ENCODE measurements at regions of chr11 and their contacts with region 1.

Region 1: DNA sequence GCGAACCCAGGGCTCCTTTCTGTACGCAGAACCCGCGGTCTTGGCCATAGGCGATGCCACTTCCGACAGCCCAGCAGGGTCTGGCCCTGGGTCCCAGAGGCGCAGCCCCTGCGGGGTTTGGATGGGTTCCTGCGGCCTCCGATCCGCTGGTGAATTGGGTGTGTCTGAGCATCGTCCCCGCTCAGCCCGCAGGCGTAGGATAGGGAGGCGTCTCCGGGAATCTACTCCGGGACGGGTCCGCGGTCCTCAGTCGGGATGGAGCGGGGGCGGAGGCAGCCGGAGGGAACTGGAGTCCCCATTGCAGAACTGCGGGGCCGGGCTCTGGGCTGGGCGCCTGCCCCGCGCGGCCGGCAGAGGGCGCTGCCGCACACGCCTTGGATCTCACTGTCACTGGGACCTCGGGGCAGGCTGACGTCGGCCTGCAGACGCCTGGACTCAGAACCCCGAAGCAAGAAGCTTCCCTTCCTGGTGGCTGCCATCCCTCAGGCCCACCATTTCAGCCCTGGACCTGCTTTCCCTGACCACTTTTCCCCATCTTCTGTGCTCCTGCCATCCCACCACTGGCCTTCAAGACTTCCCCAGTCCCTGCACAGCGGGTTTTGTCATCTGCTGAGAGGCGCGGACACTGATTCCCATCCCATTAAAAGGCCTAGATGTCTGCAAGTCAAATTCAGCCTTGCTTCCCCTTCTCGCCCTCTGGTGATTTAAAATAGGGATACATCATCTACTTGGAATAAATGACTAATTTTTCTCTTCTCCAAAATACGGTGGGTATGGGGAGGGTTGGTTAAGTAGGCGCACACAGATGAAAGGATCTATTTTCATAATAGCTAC is 38.3 kb upstream of the CREB3L1 start:
- DNase-seq: no peak
- ATAC-seq: peak; percentile 93
- H3K4me3 ChIP-seq: peak overlapping the region; percentile 39; the same call in 1 of the 2 replicates
- H3K27ac ChIP-seq: no peak overlapping the region
- H3K4me1 ChIP-seq: peaks cover 12% of the 10 kb centered on the region
- H3K27me3 ChIP-seq: peaks cover 0 to 5% of the 10 kb centered on the region in 2 experiments; a peak in 1 of 4 replicates
- CTCF ChIP-seq: peak; percentile 95 to 96 (median 95)
- EP300 ChIP-seq: no peak
- POLR2A ChIP-seq: no peak
- RAD21 ChIP-seq: peak; percentile 86

Region 2: GRCh38 chr11:46265764-46266163 is 26.6 kb after region 1 on chr11:
- CTCF ChIA-PET with region 1: interaction called, 8 read pairs
- POLR2A ChIA-PET with region 1: interaction called, 3 read pairs
- RAD21 ChIA-PET with region 1: interaction called, 4 read pairs
- SMC1A ChIA-PET with region 1: interaction called, 10 read pairs
- in situ Hi-C with region 1: no loop called
- intact Hi-C with region 1: no loop called
- DNase-seq: peak; percentile 47
- ATAC-seq: peak; percentile 58
- H3K4me3 ChIP-seq: no peak overlapping the region
- H3K27ac ChIP-seq: peak overlapping the region; percentile 61
- H3K4me1 ChIP-seq: peaks cover 33% of the 10 kb centered on the region
- H3K27me3 ChIP-seq: no peaks in the 10 kb centered on the region
- CTCF ChIP-seq: peak in 1 of 3 experiments; percentile 53; a peak in 2 of 6 replicates
- EP300 ChIP-seq: no peak
- POLR2A ChIP-seq: no peak
- RAD21 ChIP-seq: no peak

Region 3: DNA sequence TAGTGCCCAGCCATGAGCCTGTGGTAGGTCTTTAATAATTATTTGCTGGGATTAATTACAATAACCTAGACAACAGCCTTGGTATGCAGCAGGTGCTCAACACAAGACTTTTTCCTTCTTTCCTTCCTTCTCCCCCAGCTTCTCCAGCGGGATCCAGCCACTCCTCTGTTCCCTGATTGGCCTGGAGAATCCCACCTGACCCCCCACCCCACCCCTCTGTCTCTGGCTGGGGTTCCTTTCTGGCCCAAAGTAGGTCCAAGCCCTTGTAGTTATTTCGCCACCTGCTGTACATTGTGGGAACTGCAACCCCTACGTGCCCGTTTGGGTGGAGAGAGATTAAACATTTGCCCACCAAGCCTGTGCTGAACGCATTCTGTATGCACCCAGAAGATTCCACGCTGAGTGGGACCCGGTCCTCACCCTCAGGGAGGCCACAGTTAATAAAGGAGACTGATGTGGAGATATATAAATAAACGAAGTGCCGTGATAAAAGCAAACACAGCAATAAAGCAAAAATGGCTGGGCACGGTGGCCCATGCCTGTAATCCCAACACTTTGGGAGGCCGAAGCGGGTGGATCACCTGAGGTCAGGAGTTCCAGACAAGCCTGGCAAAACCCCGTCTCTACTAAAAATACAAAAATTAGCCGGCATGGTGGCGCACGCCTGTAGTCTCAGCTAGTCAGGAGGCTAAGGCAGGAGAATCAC is 76.0 kb after region 1 on chr11:
- CTCF ChIA-PET with region 1: interaction called, 626 read pairs
- POLR2A ChIA-PET with region 1: interaction called, 4 read pairs
- RAD21 ChIA-PET with region 1: interaction called, 316 read pairs
- SMC1A ChIA-PET with region 1: interaction called, 120 read pairs
- in situ Hi-C with region 1: loop called (anchors 5 kb)
- intact Hi-C with region 1: loop called (anchors 1 kb)
- DNase-seq: no peak
- ATAC-seq: peak; percentile 86
- H3K4me3 ChIP-seq: no peak overlapping the region
- H3K27ac ChIP-seq: no peak overlapping the region
- H3K4me1 ChIP-seq: peaks cover 9% of the 10 kb centered on the region
- H3K27me3 ChIP-seq: no peaks in the 10 kb centered on the region
- CTCF ChIP-seq: peak; percentile 80 to 97 (median 97)
- EP300 ChIP-seq: no peak
- POLR2A ChIP-seq: no peak
- RAD21 ChIP-seq: peak; percentile 78

Region 4: DNA sequence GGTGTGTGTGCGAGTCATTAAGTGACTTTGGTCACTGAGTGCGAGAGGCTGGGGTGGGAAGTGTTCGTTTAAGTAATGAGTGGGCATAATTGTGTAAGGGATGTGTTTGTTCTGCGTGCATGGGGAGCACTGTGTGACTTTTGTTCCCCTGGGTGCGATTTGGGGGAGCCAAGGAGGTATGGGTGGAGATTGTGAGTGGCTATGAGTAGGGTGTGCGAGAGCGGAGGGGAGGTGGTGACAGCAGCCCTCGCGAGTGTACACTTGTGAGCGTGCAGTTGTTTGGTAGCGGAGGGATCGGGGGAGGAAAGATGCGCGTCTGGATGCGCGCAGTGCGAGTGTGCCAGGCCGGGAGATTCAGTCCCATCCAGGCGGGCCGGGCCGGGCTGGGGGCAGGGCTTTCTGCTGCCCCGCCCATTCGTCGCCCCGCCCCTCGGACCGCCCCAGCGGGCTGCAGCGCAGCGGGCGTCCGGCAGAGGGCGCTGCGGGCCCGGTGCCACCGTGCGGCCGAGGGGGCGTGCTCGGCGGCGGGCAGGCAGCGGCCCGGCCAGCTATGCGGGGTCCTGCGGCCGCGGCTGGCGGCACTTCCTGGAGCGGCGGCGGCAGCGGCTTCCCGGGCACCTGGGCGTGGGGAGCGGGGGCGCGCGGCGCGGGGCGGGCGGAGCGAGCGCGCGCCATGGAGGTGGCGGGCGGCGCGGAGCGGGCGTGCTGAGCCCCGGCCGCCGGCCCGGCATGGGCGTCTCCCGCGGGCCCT is 107.9 kb after region 1 on chr11 and contains the start of gene DGKZ:
- CTCF ChIA-PET with region 1: interaction called, 16 read pairs
- POLR2A ChIA-PET with region 1: interaction called, 8 read pairs
- RAD21 ChIA-PET with region 1: interaction called, 24 read pairs
- SMC1A ChIA-PET with region 1: interaction called, 6 read pairs
- in situ Hi-C with region 1: no loop called
- intact Hi-C with region 1: no loop called
- DNase-seq: no peak
- ATAC-seq: peak; percentile 69
- H3K4me3 ChIP-seq: peak within 1 kb of the TSS; percentile 88
- H3K27ac ChIP-seq: peak within 1 kb of the TSS; percentile 71
- H3K4me1 ChIP-seq: peaks cover 39% of the 10 kb centered on the region
- H3K27me3 ChIP-seq: no peaks in the 10 kb centered on the region
- CTCF ChIP-seq: peak; percentile 63 to 92 (median 64); a peak in 4 of 6 replicates
- EP300 ChIP-seq: no peak
- POLR2A ChIP-seq: no peak; the same call in 1 of the 2 replicates
- RAD21 ChIP-seq: peak; percentile 64
- polyA plus RNA-seq, gene DGKZ: 0.50 to 1.6 TPM

Region 5: GRCh38 chr11:46537537-46538295 is 298.5 kb after region 1 on chr11:
- CTCF ChIA-PET with region 1: no interaction called
- POLR2A ChIA-PET with region 1: no interaction called
- RAD21 ChIA-PET with region 1: no interaction called
- SMC1A ChIA-PET with region 1: no interaction called
- in situ Hi-C with region 1: no loop called
- intact Hi-C with region 1: loop called (anchors 10 kb)
- DNase-seq: no peak
- ATAC-seq: peak; percentile 99
- H3K4me3 ChIP-seq: no peak overlapping the region
- H3K27ac ChIP-seq: no peak overlapping the region
- H3K4me1 ChIP-seq: no peaks in the 10 kb centered on the region
- H3K27me3 ChIP-seq: no peaks in the 10 kb centered on the region
- CTCF ChIP-seq: peak; percentile 90 to 95 (median 93); a peak in 5 of 6 replicates
- EP300 ChIP-seq: no peak
- POLR2A ChIP-seq: no peak
- RAD21 ChIP-seq: peak; percentile 95

Region 6: GRCh38 chr11:46597609-46598219 is 358.5 kb after region 1 on chr11:
- CTCF ChIA-PET with region 1: no interaction called
- POLR2A ChIA-PET with region 1: no interaction called
- RAD21 ChIA-PET with region 1: no interaction called
- SMC1A ChIA-PET with region 1: no interaction called
- in situ Hi-C with region 1: no loop called
- intact Hi-C with region 1: no loop called
- DNase-seq: no peak
- ATAC-seq: no peak
- H3K4me3 ChIP-seq: no peak overlapping the region
- H3K27ac ChIP-seq: no peak overlapping the region
- H3K4me1 ChIP-seq: 0 out of 2 replicates have a peak, but pooled peaks cover 3% of the 10 kb centered on the region
- H3K27me3 ChIP-seq: no peaks in the 10 kb centered on the region
- CTCF ChIP-seq: no peak
- EP300 ChIP-seq: no peak
- POLR2A ChIP-seq: no peak
- RAD21 ChIP-seq: no peak

Region 7: GRCh38 chr11:46762248-46762647 is 523.1 kb after region 1 on chr11:
- CTCF ChIA-PET with region 1: no interaction called
- POLR2A ChIA-PET with region 1: no interaction called
- RAD21 ChIA-PET with region 1: no interaction called
- SMC1A ChIA-PET with region 1: no interaction called
- in situ Hi-C with region 1: no loop called
- intact Hi-C with region 1: no loop called
- DNase-seq: no peak
- ATAC-seq: no peak
- H3K4me3 ChIP-seq: no peak overlapping the region
- H3K27ac ChIP-seq: no peak overlapping the region
- H3K4me1 ChIP-seq: no peaks in the 10 kb centered on the region
- H3K27me3 ChIP-seq: no peaks in the 10 kb centered on the region
- CTCF ChIP-seq: no peak
- EP300 ChIP-seq: no peak
- POLR2A ChIP-seq: no peak
- RAD21 ChIP-seq: no peak

Measured in GM12878 (cell line).